Activated CD4-positive, alpha-beta T cell treated with anti-CD3 and anti-CD28 coated beads for 36 hours (primary cell): ENCODE measurements at regions of chr14 and their contacts with region 1.

Region 1: DNA sequence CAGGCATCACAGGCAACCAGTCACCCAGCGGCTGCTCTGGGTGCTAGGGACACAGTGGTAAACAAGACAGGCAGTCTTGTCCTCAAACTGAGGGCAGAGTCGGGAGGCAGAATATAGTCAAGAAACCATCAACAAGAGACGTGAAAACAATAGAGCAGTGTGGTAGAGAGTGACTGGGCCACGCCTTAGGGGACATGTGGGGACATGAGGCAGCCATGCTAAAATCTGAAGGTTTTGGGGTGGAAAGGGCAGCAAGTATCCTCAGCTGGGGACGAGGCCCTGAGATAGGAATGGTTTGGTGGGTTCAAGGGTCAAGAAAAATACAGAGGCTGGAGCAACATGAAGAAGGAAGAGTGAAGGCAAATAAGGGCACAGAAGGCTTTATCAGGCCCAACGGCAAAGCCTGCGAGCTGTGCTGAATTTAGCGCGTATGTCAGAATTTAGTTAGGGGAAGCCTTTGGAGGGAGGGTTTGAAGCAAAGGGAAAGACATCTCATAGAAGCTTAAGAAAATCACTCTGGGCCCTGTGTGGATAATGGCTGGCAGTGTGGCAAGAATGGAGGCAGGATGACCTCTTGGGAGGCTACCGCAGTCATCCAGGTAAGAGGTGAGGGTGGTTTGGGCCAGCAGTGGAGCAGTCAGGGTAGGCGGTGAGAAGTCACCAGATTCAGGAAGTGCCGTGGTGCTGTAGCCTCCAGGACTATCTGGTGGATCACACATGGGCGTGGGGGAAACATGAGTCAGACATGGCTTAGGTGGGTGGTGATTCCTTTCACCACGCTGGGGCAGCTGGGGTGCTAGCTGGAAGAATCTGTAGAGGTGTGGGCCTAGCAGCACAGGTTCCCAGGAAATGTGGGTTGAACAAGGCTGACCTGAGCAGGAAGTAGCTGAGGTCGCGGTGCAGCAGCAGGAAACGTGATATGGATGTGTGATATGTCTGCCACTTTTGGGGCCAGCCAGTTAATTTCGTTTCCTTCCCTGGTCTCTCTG is 3.0 kb downstream of the EVL start:
- DNase-seq: peak; percentile 93
- ATAC-seq: peak; percentile 38
- H3K4me3 Mint-ChIP-seq: peak overlapping the region; percentile 75
- H3K27ac Mint-ChIP-seq: peak overlapping the region; percentile 99
- H3K4me1 Mint-ChIP-seq: peaks cover 64% of the 10 kb centered on the region
- H3K27me3 Mint-ChIP-seq: no peaks in the 10 kb centered on the region

Region 2: GRCh38 chr14:99230208-99231151 is 837.8 kb before region 1 on chr14:
- CTCF ChIA-PET with region 1: interaction called, 3 read pairs
- POLR2A ChIA-PET with region 1: no interaction called
- intact Hi-C with region 1: loop called in 1 of 2 experiments (anchors 10 kb)
- DNase-seq: peak; percentile 91
- ATAC-seq: peak; percentile 55
- H3K4me3 Mint-ChIP-seq: peak overlapping the region; percentile 67
- H3K27ac Mint-ChIP-seq: peak overlapping the region; percentile 88
- H3K4me1 Mint-ChIP-seq: peaks cover 93% of the 10 kb centered on the region
- H3K27me3 Mint-ChIP-seq: no peaks in the 10 kb centered on the region

Region 3: DNA sequence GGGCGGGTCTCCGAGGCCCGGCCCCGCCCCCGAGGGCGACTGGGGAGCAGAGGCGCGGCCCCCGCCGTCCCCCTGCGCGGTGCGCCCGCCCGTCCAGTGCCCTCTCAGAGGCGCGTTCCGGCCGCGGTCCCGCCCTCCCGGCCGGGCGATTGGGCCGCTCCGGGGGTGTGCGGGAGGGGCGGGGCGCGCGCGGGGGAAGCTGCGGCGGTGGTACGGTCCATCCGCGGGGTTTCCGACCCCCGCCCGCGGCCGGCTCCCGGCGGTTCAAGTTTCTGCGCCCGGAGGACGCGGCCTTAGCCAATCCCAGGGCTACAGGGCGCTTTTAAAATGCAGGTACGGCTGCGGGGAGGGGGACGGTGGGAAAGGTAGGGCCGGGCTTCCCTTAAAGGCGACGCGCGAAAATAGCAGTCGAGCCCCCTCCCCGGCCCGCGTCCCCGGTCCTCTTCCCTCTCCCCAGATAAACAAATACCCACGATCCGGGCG is 463.9 kb before region 1 on chr14:
- CTCF ChIA-PET with region 1: interaction called, 3 read pairs
- POLR2A ChIA-PET with region 1: no interaction called
- intact Hi-C with region 1: loop called in 1 of 2 experiments (anchors 5 kb)
- DNase-seq: peak; percentile 96
- ATAC-seq: peak; percentile 94
- H3K4me3 Mint-ChIP-seq: peak overlapping the region; percentile 72
- H3K27ac Mint-ChIP-seq: peak overlapping the region; percentile 72
- H3K4me1 Mint-ChIP-seq: peaks cover 28% of the 10 kb centered on the region
- H3K27me3 Mint-ChIP-seq: peaks cover 2% of the 10 kb centered on the region

Region 4: DNA sequence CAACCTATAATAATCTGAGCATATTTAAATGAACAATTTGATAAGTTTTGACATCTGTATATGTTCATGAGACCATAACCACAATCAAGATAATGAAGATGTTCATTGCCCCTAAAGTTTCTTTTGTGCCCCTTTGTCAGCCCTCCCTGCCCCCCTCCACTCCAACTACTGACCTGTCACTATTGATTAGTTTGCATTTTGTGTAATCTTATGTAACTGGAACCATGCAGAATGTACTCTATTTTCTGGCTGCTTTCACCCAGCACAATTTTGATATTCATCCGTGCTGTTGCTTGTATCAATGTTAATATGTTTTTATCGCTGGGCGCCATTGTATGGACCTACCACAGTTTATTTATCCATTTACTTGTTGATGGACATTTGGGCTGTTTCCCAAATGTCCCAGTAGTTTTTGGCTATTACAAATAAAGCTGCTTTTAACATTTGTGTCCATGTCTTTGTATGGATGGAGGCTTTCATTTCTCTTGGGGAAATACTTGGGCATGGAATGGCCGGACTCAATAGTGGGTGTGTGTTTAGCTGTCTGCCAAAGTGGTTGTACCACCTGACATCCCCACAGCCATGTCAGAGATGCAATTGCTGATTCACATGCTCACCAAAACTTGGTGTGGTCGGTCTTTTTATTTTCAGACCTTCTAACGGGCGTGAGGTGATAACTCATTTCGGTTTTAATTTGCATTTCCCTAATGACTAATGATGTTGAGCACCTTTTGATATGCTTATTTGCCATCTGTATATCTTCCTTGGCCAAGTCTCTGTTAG is 236.2 kb before region 1 on chr14:
- CTCF ChIA-PET with region 1: no interaction called
- POLR2A ChIA-PET with region 1: no interaction called
- intact Hi-C with region 1: no loop called
- DNase-seq: no peak
- ATAC-seq: no peak
- H3K4me3 Mint-ChIP-seq: no peak overlapping the region
- H3K27ac Mint-ChIP-seq: no peak overlapping the region
- H3K4me1 Mint-ChIP-seq: peaks cover 4% of the 10 kb centered on the region
- H3K27me3 Mint-ChIP-seq: peaks cover 41% of the 10 kb centered on the region

Region 5: GRCh38 chr14:100056964-100057795 is 11.1 kb before region 1 on chr14:
- CTCF ChIA-PET with region 1: interaction called, 51 read pairs
- POLR2A ChIA-PET with region 1: interaction called, 6 read pairs
- intact Hi-C with region 1: loop called in 1 of 2 experiments (anchors 1 kb)
- DNase-seq: peak; percentile 24
- ATAC-seq: peak; percentile 37
- H3K4me3 Mint-ChIP-seq: peak overlapping the region; percentile 18
- H3K27ac Mint-ChIP-seq: peak overlapping the region; percentile 81
- H3K4me1 Mint-ChIP-seq: peaks cover 58% of the 10 kb centered on the region
- H3K27me3 Mint-ChIP-seq: no peaks in the 10 kb centered on the region

Region 6: DNA sequence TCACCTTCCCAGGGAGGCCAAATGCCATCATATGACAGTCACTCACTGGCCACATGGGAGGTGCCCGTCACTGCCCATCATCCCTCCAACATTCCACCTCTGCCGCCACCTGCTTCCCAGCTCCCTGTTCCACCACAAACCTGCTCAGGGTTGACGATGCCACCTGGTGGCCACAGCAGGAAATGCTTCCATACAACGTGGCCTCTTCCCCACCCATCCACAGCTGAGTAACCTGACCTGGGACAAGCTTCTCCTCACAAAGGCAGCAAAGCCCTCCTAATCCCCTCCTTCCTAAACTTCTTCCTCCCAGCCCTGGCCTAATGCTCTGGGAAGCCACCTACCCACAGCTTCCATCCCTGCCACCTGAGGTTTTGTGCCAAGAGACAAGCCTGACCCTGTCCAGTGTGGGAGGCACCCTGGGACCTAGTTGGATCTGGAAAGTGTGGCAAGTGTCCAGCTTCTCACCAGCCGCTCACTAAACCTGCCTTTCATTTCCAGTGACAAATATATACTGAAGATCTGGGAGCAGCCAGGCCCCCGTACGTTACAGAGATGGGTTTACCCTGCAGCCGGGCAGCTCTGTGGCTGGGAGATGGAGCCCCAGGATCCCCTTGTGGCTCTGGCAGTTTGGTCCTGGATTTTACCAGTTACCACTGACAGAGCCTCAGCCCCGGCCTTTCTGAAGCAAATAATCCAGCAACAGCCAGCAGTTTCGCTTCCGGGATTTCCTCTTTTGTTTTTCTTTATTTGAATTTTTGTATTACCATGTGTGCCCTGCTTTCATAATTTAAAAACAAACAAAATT is 87.0 kb after region 1 on chr14:
- CTCF ChIA-PET with region 1: interaction called, 5 read pairs
- POLR2A ChIA-PET with region 1: no interaction called
- intact Hi-C with region 1: loop called in 1 of 2 experiments (anchors 5 kb)
- DNase-seq: peak; percentile 75
- ATAC-seq: no peak
- H3K4me3 Mint-ChIP-seq: no peak overlapping the region
- H3K27ac Mint-ChIP-seq: no peak overlapping the region
- H3K4me1 Mint-ChIP-seq: peaks cover 6% of the 10 kb centered on the region
- H3K27me3 Mint-ChIP-seq: peaks cover 15% of the 10 kb centered on the region

Region 7: GRCh38 chr14:101761032-101761880 is 1693.0 kb after region 1 on chr14 and contains the start of gene PPP2R5C:
- CTCF ChIA-PET with region 1: no interaction called
- POLR2A ChIA-PET with region 1: no interaction called
- intact Hi-C with region 1: loop called in 1 of 2 experiments (anchors 5 kb)
- DNase-seq: peak; percentile 94
- ATAC-seq: peak; percentile 65
- H3K4me3 Mint-ChIP-seq: peak within 1 kb of the TSS; percentile 85
- H3K27ac Mint-ChIP-seq: peak within 1 kb of the TSS; percentile 78
- H3K4me1 Mint-ChIP-seq: peaks cover 43% of the 10 kb centered on the region
- H3K27me3 Mint-ChIP-seq: no peaks in the 10 kb centered on the region
- total RNA-seq, gene PPP2R5C: 232 to 281 TPM